Heart right ventricle (tissue), 16 donors: ENCODE measurements at regions of chr2 and their contacts with region 1.

Region 1: GRCh38 chr2:71226965-71227560 is at the start of gene PAIP2B:
- DNase-seq: peak; percentile 98 to 99
- ATAC-seq: peak; percentile 93 to 99 (median 96)
- H3K4me3 ChIP-seq: peak within 1 kb of the TSS; percentile 49 to 94 (median 84)
- H3K27ac ChIP-seq: peak within 1 kb of the TSS; percentile 51 to 95 (median 90)
- H3K4me1 ChIP-seq: peaks cover 0 to 19% (median 6%) of the 10 kb centered on the region in 9 donors
- H3K27me3 ChIP-seq: peaks cover 0 to 5% (median 0%) of the 10 kb centered on the region in 7 donors
- CTCF ChIP-seq: peak in 1 of 9 donors; percentile 5
- total RNA-seq, gene PAIP2B: 45.9 to 108 (median 61.1) TPM

Region 2: DNA sequence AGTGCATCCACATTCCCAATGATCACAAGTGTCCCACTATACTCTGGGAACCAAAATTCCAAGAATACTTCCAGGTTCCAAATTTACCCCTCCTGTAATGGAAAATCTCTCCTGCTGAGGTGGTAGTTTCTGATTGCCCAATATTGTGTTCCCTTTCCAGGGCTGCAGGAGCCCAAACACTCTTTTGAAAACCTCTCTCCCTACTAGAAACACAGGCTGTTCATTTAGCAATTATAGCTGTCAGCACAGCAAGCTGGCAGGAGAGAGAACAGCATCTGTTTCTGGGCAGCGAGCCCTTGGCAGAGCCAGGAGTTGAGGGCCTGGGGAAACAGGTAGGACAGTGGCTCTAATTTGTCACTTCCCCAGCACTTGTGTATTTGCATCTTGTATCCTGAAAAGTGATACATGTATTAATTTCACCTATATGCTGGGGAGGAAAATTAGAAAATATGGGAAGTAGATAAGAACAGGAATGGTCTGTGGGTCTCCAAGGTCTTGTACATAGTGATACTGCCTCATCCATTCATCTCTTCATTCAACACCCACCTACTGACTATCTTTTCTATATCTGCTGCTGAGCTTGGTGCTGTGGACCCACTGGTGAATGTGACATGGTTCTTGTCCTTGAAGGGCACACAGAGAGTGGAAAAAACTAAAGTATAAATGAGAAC is 16.7 kb after region 1 on chr2:
- intact Hi-C with region 1: loop called in 1 of 10 experiments (anchors 2 kb)
- DNase-seq: peak; percentile 54 to 73
- ATAC-seq: peak; percentile 88 to 97 (median 95)
- H3K4me3 ChIP-seq: no peak overlapping the region
- H3K27ac ChIP-seq: peak overlapping the region in 9 of 10 donors; percentile 2 to 79 (median 71)
- H3K4me1 ChIP-seq: peaks cover 0 to 41% (median 14%) of the 10 kb centered on the region in 9 donors
- H3K27me3 ChIP-seq: no peaks in the 10 kb centered on the region
- CTCF ChIP-seq: no peak

Region 3: GRCh38 chr2:71276311-71277146 is 49.5 kb after region 1 on chr2:
- intact Hi-C with region 1: loop called in 9 of 10 experiments (anchors 1 to 5 kb)
- DNase-seq: peak; percentile 90 to 94
- ATAC-seq: peak; percentile 97 to 99 (median 98)
- H3K4me3 ChIP-seq: peak overlapping the region; percentile 55 to 73 (median 66)
- H3K27ac ChIP-seq: peak overlapping the region; percentile 77 to 93 (median 89)
- H3K4me1 ChIP-seq: peaks cover 0 to 53% (median 19%) of the 10 kb centered on the region in 9 donors
- H3K27me3 ChIP-seq: peaks cover 0 to 39% (median 0%) of the 10 kb centered on the region in 7 donors
- CTCF ChIP-seq: peak in 2 of 9 donors; percentile 12 to 18

Region 4: DNA sequence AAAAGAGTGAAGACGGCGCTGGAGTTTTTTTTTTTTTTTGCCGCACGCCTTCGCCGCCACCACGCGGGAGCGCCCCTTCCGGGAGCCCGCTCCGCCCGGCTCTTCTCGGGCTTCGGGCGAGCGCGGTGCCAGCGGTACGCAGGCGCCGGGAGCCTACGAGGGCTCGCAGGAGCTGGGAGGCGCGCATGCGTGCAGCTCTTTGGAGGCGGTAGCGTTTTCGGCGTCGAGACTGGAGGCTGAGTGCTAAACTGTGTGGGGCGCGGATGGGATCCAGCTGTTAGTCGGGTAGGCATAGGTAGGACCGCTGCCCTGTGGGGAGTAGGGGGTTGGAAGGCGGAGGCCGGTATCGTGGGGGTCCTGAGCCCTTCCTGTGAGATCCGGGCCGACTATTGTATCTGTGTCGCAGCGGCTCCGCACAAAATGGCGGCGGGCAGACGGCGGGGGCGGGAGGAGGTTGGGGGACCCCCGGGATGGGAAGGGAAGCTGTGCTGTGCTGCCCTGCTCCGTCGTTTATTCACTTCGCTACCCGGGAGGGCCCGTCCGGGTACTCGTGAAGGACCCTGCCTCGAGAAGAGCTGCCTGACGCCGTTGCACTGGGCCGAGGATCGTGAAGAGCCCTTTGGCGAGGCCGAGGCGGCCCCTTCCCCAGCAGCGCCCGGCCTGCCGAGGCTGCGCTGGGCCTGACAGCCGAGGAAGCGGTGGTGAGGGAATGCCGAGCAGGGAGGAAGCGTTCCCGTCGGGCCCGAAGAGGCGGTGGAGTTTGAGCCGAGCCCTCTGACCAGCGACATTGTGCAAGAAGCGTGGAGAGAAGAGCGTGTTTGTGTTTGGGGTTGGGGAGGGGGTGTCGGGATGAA is 104.7 kb after region 1 on chr2 and contains the start of gene ZNF638:
- intact Hi-C with region 1: loop called in 7 of 10 experiments (anchors 1 to 5 kb)
- DNase-seq: peak; percentile 92 to 95
- ATAC-seq: peak; percentile 99
- H3K4me3 ChIP-seq: peak within 1 kb of the TSS; percentile 71 to 97 (median 84)
- H3K27ac ChIP-seq: peak within 1 kb of the TSS; percentile 80 to 96 (median 92)
- H3K4me1 ChIP-seq: peaks cover 3 to 52% (median 41%) of the 10 kb centered on the region in 9 donors
- H3K27me3 ChIP-seq: no peaks in the 10 kb centered on the region
- CTCF ChIP-seq: peak; percentile 62 to 92 (median 84)
- total RNA-seq, gene ZNF638: 68.4 to 100 (median 82.8) TPM

Region 5: DNA sequence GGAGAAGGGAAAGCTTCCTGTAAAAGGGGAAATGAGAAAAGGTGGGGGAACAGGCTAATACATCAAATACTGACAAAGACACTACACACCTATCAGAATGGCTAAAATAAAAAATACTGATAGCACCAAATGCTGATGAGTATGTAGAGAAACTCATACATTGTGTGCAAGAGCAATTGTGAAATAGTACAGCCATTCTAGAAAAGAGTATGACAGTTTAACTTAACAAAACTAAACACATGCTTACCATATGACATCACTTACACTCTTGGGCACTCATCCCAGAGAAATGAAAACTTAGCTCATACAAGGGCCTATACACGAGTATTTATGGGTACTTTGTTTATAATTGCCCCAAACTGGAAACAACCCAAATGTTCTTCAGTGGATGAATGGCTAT is 157.9 kb after region 1 on chr2:
- intact Hi-C with region 1: loop called in 1 of 10 experiments (anchors 10 kb)
- DNase-seq: no peak
- ATAC-seq: peak in 6 of 8 donors; percentile 20 to 68 (median 50)
- H3K4me3 ChIP-seq: no peak overlapping the region
- H3K27ac ChIP-seq: peak overlapping the region in 1 of 10 donors; percentile 17
- H3K4me1 ChIP-seq: peaks cover 0 to 13% (median 3%) of the 10 kb centered on the region in 9 donors
- H3K27me3 ChIP-seq: no peaks in the 10 kb centered on the region
- CTCF ChIP-seq: no peak

Region 6: GRCh38 chr2:71505086-71505769 is 278.2 kb after region 1 on chr2:
- intact Hi-C with region 1: loop called in 7 of 10 experiments (anchors 5 to 10 kb)
- DNase-seq: peak; percentile 51 to 52
- ATAC-seq: peak in 5 of 8 donors; percentile 5 to 25 (median 12)
- H3K4me3 ChIP-seq: no peak overlapping the region
- H3K27ac ChIP-seq: peak overlapping the region in 9 of 10 donors; percentile 62 to 96 (median 89)
- H3K4me1 ChIP-seq: peaks cover 36 to 79% (median 58%) of the 10 kb centered on the region in 9 donors
- H3K27me3 ChIP-seq: no peaks in the 10 kb centered on the region
- CTCF ChIP-seq: no peak

Region 7: DNA sequence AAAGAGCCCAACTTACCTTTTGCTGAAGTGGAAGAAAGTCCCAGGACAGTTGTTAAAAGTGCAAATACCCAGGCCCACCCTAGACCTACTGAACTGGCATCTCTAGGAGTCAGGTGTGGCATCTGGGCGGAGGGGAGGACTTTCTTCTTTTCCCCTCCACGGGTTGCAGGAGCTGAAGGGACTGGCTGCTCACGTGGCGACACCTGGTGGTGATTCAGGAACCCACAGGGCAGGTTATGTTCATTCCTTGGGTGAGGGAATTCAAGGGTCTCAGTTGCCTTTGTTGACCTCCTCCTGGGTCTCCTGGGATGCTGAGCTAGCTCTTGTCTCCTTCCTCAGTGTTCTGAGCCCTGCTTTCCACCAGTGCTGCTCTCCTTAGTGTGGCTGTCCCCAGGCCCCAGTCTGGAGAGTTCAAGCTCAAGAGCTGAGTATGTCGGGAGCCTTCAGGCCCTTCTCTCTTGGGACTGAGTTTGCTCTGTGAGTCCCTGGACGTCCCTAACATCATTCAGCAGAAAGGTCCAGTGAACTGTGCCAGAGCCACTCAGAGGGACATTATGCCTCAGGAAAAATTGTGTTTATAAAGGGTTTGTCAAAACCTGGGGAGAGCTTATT is 283.2 kb after region 1 on chr2:
- intact Hi-C with region 1: loop called in 7 of 10 experiments (anchors 5 to 10 kb)
- DNase-seq: peak; percentile 72 to 74
- ATAC-seq: peak; percentile 33 to 71 (median 50)
- H3K4me3 ChIP-seq: no peak overlapping the region
- H3K27ac ChIP-seq: no peak overlapping the region
- H3K4me1 ChIP-seq: peaks cover 5 to 31% (median 14%) of the 10 kb centered on the region in 9 donors
- H3K27me3 ChIP-seq: no peaks in the 10 kb centered on the region
- CTCF ChIP-seq: peak; percentile 87 to 97 (median 92)